ENCODE measurements at regions of chr19 and their contacts with region 1.

Region 1: DNA sequence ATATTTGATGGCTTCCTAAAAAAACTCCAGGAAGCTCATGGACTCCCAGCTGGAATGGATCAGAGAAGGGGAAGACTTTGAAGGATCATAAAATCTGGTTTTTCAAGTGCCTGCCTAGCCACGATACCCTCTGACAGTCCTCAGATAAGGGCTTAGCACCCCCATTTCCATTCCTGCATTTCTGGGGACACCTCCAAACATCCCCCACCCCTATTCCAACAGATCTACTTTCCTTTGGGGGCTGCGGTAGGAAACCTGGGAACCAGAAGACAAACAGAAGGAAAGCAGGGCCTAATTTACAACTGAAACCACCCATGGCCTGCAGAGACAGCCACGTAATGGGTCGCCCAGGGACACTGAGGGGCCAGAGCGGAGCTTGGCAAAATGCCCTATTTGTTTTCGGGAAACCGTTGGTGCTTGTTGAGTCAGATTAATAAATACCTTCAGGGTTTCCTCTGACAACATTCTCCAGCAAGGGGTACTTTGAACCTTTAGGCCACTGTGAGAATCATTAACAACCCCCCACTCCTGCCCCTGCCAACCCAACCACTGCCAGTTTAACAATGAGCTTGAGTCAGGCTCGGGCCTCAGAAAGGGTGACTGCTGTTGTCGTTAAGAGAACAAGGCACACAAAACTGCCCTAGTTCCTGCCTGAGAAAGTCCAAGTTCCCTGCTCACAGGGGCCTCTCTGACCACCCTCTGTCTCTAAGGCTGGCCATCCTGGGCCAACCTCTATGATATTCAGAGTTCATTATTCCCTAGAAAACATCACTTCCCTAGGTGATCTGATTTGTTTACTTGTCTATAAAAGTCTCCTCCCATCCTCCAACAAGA is 23.5 kb downstream of the RHPN2 start:
- DNase-seq: no peak
- H3K4me3 Mint-ChIP-seq: no peak overlapping the region
- H3K27ac Mint-ChIP-seq: no peak overlapping the region
- H3K4me1 Mint-ChIP-seq: peaks cover 9% of the 10 kb centered on the region
- H3K27me3 Mint-ChIP-seq: no peaks in the 10 kb centered on the region

Region 2: DNA sequence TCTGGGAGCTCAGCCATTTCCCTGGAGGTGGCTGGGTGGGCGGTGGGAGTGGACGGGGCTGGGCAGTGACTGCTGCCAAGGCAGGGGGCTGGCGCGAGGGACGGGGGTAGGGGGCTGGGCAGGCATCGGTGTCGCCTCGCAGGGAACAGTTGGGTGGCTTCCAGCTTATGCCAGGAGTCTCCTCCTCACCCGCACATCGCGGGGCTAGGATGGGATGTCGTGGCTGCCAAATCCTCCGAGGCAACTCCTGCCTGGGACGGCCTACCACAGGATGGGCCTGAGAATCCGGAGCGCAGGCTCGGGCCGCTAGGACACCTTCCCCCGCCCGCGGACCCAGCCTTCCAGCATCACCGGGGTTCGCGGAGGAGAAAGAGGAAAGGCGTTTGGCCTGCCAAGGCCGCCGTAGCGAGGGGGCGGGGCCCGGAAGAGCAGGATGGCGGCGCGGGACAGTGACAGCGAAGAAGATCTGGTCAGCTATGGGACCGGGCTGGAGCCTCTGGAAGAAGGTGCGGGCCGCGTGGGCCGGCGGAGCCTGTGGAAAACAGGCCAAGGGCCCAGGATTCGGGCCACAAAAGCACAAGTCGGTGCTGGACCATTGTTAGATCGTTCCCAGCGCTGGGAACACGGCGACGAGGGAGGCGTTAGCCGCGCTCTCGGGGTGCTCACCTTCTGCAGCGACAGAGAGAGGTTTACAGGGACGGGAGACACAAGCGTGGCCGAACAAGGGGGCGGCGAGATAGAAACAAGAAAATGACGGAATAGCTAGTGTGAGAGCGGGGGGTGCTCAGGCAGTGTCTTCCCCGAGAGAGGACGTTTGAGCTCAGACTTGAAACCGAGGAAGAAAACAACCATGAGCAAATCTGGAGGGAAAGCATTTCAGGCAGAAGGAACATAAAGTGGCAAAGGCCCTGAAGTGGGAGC is 39.8 kb after region 1 on chr19 and contains the start of gene GPATCH1:
- CTCF ChIA-PET with region 1: no interaction called
- intact Hi-C with region 1: loop called (anchors 1 kb)
- DNase-seq: peak; percentile 89
- H3K4me3 Mint-ChIP-seq: peak within 1 kb of the TSS; percentile 99
- H3K27ac Mint-ChIP-seq: peak within 1 kb of the TSS; percentile 88
- H3K4me1 Mint-ChIP-seq: peaks cover 25% of the 10 kb centered on the region
- H3K27me3 Mint-ChIP-seq: no peaks in the 10 kb centered on the region
- total RNA-seq, gene GPATCH1: 8.3 to 9.1 TPM

Region 3: GRCh38 chr19:33110137-33110910 is 69.1 kb after region 1 on chr19:
- CTCF ChIA-PET with region 1: no interaction called
- intact Hi-C with region 1: no loop called
- DNase-seq: no peak
- H3K4me3 Mint-ChIP-seq: no peak overlapping the region
- H3K27ac Mint-ChIP-seq: no peak overlapping the region
- H3K4me1 Mint-ChIP-seq: no peaks in the 10 kb centered on the region
- H3K27me3 Mint-ChIP-seq: no peaks in the 10 kb centered on the region